ENCODE measurements at regions of chr15 and their contacts with region 1.

Region 1: GRCh38 chr15:89129123-89129815 is 41.0 kb downstream of the ABHD2 start:
- DNase-seq: peak; percentile 64
- ATAC-seq: no peak
- H3K4me3 Mint-ChIP-seq: no peak overlapping the region
- H3K27ac Mint-ChIP-seq: no peak overlapping the region
- H3K4me1 Mint-ChIP-seq: peaks cover 15% of the 10 kb centered on the region
- H3K27me3 Mint-ChIP-seq: no peaks in the 10 kb centered on the region

Region 2: DNA sequence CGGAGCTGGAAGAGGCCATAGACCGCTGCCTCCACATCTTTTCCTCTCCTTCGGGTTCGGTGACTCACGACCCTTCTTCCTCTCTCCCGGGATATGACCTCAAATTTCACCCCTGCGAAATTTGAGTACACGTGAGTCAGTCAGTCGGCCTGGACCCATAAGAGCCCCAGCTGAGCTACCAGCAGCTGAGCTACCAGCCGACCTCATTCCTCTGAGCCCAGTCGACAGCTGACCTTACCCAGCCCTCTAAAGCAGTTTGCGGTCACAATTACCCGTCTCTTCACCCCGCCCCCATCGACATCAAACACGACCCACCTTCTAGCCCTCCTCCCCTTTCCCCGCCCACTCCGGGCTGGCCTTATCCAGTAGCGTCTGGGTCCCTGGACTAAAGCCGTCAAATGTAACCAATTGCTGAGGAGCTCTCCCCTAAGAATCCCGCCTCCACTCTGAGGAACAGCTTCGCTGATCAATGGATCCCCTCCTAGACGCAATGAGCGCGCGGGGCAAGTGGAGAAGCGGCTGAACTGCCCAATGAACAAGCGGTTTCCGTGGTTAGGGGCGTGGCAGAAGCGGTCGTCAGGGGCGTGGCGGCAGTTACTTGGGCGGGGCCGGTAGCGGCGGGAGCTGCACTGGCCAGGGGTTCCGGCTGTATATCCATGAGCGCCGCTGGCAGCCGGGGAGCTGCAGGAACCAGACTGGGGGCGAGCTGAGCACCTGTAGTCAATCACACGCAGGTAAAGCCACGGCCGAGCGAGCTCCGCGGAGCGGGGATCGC is 41.3 kb before region 1 on chr15 and contains the start of gene ABHD2:
- CTCF ChIA-PET with region 1: interaction called, 61 read pairs
- POLR2A ChIA-PET with region 1: interaction called, 3 read pairs
- DNase-seq: peak; percentile 99
- ATAC-seq: peak; percentile 99
- H3K4me3 Mint-ChIP-seq: no peak within 1 kb of the TSS
- H3K27ac Mint-ChIP-seq: no peak within 1 kb of the TSS
- H3K4me1 Mint-ChIP-seq: peaks cover 31% of the 10 kb centered on the region
- H3K27me3 Mint-ChIP-seq: no peaks in the 10 kb centered on the region
- total RNA-seq, gene ABHD2: 71.3 to 71.9 TPM